ENCODE measurements at regions of chr17 and their contacts with region 1.

Region 1: DNA sequence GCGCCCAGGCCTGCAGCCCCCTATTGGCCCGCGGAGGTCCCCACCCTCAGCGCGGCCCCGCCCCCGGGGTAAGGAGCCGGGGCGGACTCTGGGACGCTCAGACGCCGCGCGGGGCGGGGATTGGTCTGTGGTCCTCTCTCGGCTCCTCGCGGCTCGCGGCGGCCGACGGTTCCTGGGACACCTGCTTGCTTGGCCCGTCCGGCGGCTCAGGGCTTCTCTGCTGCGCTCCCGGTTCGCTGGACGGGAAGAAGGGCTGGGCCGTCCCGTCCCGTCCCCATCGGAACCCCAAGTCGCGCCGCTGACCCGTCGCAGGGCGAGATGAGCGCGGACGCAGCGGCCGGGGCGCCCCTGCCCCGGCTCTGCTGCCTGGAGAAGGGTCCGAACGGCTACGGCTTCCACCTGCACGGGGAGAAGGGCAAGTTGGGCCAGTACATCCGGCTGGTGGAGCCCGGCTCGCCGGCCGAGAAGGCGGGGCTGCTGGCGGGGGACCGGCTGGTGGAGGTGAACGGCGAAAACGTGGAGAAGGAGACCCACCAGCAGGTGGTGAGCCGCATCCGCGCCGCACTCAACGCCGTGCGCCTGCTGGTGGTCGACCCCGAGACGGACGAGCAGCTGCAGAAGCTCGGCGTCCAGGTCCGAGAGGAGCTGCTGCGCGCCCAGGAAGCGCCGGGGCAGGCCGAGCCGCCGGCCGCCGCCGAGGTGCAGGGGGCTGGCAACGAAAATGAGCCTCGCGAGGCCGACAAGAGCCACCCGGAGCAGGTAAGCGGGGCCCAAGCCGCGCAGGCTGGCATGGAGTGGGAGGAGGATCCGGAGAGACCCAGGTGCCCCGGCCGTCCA is at the start of gene NHERF1:
- DNase-seq: peak; percentile 90 to 94 (median 94)
- H3K4me3 ChIP-seq: peak within 1 kb of the TSS; percentile 81 to 98 (median 96)
- H3K27ac ChIP-seq: peak within 1 kb of the TSS; percentile 54 to 81
- H3K4me1 ChIP-seq: peaks cover 18 to 84% (median 80%) of the 10 kb centered on the region in 4 experiments
- H3K27me3 ChIP-seq: no peaks in the 10 kb centered on the region

Region 2: DNA sequence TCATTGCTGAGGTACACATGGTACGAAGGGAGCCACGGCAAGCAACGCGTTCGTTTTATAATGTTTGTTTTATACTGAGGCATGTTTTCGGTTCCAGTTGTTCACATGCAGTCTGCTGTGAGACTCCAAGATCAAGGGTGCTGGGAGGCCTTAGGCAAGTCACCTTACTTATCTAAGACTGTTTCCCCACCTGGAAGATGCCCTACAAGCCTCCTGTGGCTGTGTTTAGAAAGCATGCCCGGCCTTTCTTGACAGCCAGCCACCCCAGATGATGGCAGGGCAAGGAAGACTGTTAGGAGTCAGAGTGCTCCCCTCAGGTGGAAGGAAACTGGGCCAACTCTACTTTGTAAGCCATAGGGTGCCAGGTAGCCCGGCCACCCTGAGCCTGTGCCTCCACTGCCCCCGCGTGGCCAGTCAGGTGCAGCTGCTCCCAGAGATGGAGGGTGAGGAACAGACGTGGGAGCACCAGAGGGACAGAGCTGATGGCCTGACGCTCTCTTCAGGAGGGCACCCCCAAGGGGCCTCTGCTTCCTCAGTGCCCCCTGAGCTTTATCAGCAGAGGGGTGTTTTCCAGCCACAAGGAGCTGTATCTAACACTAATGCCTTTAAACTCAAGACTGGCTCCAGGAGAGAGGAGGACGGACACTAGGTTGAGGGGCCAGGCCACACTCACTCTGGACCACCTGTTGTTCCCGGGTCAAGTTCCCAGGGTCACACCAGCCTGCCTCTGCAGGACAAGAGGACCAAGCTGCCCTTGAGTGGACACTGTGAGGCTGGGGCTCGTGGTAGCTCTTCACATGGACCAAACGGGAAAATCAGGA is 22.0 kb after region 1 on chr17:
- CTCF ChIA-PET with region 1: interaction called, 175 read pairs
- POLR2A ChIA-PET with region 1: interaction called, 5 read pairs
- DNase-seq: peak; percentile 51 to 72 (median 66)
- H3K4me3 ChIP-seq: no peak overlapping the region
- H3K27ac ChIP-seq: no peak overlapping the region
- H3K4me1 ChIP-seq: peaks cover 4 to 16% (median 8%) of the 10 kb centered on the region in 4 experiments
- H3K27me3 ChIP-seq: no peaks in the 10 kb centered on the region

Region 3: DNA sequence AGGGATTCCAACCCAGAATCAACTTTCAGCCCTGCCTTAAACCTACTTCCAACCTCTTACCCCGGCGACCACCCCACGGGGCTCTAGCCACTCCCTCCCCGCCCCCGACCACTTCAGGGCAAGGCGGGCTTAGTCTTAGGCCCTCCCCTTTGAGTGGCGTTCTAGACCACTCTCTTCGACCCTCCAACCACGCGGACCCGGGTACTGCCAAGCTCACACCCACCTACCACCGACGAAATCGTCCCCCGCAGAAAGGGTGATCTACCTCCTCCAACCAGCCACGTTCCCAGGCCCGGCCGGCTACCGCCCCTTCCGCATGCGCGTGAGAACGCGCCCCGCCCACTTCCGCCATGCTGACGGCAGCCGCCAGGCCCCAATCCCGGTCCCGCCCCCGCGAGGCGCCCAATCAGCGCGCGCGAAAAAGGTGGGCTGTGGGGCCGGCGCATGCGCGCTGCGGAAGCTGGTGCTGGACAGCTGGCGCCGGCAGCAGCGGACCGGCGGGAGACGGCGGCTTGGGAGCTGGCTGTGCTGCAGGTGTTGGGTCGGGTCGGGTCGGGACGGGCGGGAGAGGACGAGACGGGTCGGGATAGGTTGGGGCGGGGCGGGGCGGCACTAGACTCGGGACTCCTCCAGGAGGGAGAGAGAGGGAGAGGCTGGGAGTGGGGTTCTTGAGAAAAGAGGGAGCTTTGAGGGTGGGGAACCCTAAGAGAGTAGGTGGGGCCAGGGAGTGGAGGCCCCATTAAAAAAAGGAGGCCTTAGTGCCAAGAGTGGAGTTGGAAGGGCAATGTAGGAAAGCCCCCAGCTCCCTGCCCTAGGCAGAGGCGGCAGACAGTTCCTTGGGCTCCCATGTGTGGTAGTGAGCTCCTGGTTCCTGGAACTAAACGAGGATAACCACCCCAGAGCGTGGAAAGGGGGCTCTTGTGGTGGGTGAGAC is 27.6 kb after region 1 on chr17 and contains the start of gene NAT9:
- CTCF ChIA-PET with region 1: interaction called, 175 read pairs
- POLR2A ChIA-PET with region 1: interaction called, 7 read pairs
- DNase-seq: peak; percentile 95 to 98 (median 97)
- H3K4me3 ChIP-seq: peak within 1 kb of the TSS; percentile 38 to 96 (median 82)
- H3K27ac ChIP-seq: peak within 1 kb of the TSS; percentile 73 to 86
- H3K4me1 ChIP-seq: peaks cover 20 to 56% (median 45%) of the 10 kb centered on the region in 4 experiments
- H3K27me3 ChIP-seq: no peaks in the 10 kb centered on the region